Activated CD4-positive, alpha-beta memory T cell treated with anti-CD3 and anti-CD28 coated beads, Interleukin-2, amount 10 ng/mL, durations not matched to agents 7 days and 5 days (primary cell): ENCODE measurements at regions of chr14 and their contacts with region 1.

Region 1: DNA sequence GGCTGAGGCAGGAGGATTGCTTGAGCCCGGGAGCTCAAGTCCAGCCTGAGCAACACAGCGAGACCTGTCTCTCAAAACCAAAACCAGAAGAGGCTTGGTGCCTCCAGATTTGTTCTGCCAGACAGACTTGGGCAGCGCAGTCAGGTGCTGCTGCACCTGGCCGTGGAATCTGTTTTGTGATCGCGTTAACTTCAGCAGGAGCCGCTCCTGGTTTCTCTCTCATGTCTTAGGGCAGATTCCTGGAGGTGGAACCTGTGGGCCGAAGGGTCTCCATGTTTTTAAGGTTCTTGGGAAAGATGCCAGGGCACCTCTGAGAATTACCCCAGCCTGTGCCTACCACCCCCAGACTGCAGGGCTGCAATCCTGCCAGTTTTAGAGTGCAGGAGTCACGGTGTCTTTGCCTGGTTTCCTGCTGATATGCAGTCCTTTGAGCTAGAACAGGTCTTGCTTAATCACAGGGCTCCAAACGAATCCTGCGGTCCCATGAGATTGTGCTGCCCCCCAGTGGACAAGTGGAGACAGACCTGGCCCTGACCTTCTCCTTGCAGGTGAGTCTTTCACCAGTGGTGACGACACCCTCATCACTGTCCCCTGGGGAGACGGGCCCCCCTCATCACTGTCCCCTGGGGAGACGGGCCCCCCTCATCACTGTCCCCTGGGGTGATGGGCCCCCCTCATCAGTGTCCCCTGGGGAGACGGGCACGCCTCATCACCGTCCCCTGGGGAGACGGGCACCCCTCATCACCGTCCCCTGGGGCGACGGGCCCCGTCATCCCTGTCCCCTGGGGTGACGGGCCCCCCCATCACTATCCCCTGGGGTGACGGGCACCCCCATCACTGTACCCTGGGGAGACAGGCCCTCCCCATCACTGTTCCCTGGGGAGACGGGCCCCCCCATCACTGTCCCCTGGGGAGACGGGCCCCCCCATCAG is 37.6 kb downstream of the PACS2 start:
- DNase-seq: peak; percentile 91
- H3K4me3 Mint-ChIP-seq: no peak overlapping the region
- H3K27ac Mint-ChIP-seq: no peak overlapping the region
- H3K4me1 Mint-ChIP-seq: peaks cover 1% of the 10 kb centered on the region
- H3K27me3 Mint-ChIP-seq: no peaks in the 10 kb centered on the region

Region 2: DNA sequence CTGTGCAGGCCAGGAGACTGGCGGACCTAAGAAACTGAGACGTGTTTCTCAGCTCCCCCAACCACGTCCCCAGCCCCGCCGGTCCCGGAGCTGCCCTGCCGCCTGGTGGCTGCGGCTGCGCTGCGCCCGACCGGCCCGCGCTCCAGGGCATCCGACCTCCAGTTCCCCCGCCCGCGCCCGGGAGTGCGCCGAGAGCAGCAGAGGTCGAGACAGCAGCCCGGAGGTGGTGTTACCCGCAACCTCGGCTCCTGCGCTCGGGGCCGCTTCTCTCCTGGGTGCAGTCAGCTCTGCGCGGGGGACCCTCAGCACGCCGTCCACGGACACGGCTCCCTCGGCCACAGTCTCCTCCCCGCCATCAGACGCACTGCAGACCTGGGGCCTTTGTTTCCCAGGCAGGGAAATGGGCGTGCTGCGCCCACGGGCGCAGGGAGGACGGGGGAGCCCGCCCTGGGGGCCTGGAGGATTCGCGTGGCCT is 265.3 kb before region 1 on chr14:
- CTCF ChIA-PET with region 1: interaction called, 12 read pairs
- POLR2A ChIA-PET with region 1: no interaction called
- DNase-seq: peak; percentile 91
- H3K4me3 Mint-ChIP-seq: peak overlapping the region; percentile 71
- H3K27ac Mint-ChIP-seq: no peak overlapping the region
- H3K4me1 Mint-ChIP-seq: peaks cover 22% of the 10 kb centered on the region
- H3K27me3 Mint-ChIP-seq: peaks cover 10% of the 10 kb centered on the region

Region 3: GRCh38 chr14:105275267-105275946 is 76.8 kb before region 1 on chr14:
- CTCF ChIA-PET with region 1: no interaction called
- POLR2A ChIA-PET with region 1: no interaction called
- DNase-seq: no peak
- H3K4me3 Mint-ChIP-seq: no peak overlapping the region
- H3K27ac Mint-ChIP-seq: no peak overlapping the region
- H3K4me1 Mint-ChIP-seq: no peaks in the 10 kb centered on the region
- H3K27me3 Mint-ChIP-seq: no peaks in the 10 kb centered on the region

Region 4: GRCh38 chr14:105340821-105341733 is 11.1 kb before region 1 on chr14:
- CTCF ChIA-PET with region 1: interaction called, 12 read pairs
- POLR2A ChIA-PET with region 1: no interaction called
- DNase-seq: no peak
- H3K4me3 Mint-ChIP-seq: no peak overlapping the region
- H3K27ac Mint-ChIP-seq: no peak overlapping the region
- H3K4me1 Mint-ChIP-seq: no peaks in the 10 kb centered on the region
- H3K27me3 Mint-ChIP-seq: no peaks in the 10 kb centered on the region